RWPE1 (cell line): ENCODE measurements at regions of chr11 and their contacts with region 1.

Region 1: GRCh38 chr11:67082035-67082791 is 25.6 kb downstream of the RHOD start:
- DNase-seq: no peak
- H3K27ac ChIP-seq: peak overlapping the region; percentile 100
- CTCF ChIP-seq: no peak

Region 2: GRCh38 chr11:67053896-67054842 is 28.0 kb before region 1 on chr11:
- CTCF ChIA-PET with region 1: interaction called, 11 read pairs
- POLR2A ChIA-PET with region 1: no interaction called
- DNase-seq: peak; percentile 91
- H3K27ac ChIP-seq: peak overlapping the region; percentile 100
- CTCF ChIP-seq: peak; percentile 93

Region 3: DNA sequence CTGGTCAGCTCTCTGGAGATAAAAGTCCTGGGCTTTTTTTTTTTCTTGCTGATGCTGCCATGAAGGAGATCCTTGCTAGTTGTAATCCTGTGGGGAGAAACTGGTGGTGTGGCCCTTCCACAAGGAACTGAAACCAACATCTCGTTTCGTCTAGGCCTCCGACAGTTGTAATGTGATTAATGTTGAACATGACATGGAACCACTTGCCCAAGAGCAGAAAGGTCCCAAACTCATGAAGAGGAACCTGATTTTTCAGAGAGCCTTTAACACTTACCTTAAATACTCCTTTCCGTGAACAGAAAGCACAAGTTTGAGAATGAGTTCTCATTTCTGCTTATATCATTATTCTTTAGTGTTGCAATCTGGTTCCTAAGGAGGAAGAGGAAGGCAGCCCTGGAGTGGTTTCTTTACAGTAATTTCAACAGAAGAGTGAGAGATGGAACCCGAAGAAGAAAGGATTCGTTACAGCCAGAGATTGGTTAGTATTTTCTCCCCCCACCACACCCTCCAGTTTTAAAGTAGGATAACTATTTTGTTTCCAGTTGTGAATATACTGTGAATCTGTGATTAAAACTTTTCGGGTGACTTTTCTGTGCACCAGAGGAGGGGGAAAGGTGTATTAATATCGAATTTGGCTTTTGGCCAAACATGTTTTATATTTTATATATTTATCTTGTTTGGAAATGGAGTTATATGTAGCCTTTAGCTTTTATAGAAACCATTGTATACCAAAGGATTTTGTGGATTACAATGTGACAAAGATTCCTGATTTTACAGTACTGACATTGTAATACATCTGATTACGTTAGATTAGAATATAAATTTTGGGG is 38.9 kb after region 1 on chr11:
- CTCF ChIA-PET with region 1: interaction called, 3 read pairs
- POLR2A ChIA-PET with region 1: interaction called, 10 read pairs
- DNase-seq: no peak
- H3K27ac ChIP-seq: no peak overlapping the region
- CTCF ChIP-seq: no peak